IMR-90 (cell line): ENCODE measurements at regions of chr9 and their contacts with region 1.

Region 1: DNA sequence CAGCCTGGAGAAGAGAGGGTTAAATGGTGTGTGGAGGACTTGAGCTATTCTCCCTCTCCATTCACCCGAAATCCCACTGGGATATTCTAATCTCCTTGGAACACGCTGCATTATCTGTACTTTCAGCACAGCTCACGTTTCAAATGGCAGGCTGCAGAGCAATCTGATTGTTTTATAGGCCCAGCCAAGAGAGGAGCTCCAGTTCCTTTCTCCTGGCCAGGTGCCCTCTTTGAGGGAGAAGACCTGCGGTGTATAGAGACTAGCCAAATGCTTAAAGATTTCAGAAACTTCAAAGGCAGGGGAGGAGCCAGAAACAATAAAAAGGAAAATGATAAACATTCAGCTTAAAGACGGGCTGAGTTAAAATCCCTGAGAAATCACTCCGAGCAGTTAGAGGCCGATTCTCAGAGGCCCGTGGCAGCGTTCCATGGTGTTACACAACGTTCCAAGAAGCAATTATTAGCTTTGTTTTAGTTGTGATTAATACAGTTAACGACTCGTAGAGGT is 564.0 kb upstream of the KLF4 start:
- DNase-seq: peak; percentile 80
- ATAC-seq: 0 out of 2 replicates have a peak, but pooled peaks have one; percentile 2
- H3K4me3 ChIP-seq: no peak overlapping the region
- H3K27ac ChIP-seq: peak overlapping the region; percentile 70; the same call in 1 of the 2 replicates
- H3K4me1 ChIP-seq: peaks cover 32% of the 10 kb centered on the region
- H3K27me3 ChIP-seq: no peaks in the 10 kb centered on the region
- CTCF ChIP-seq: no peak
- POLR2A ChIP-seq: no peak
- RAD21 ChIP-seq: no peak

Region 2: GRCh38 chr9:107496976-107497375 is 556.6 kb before region 1 on chr9:
- CTCF ChIA-PET with region 1: no interaction called
- POLR2A ChIA-PET with region 1: no interaction called
- dilution Hi-C with region 1: no loop called
- in situ Hi-C with region 1: loop called (anchors 5 kb)
- intact Hi-C with region 1: no loop called
- DNase-seq: no peak
- ATAC-seq: no peak
- H3K4me3 ChIP-seq: no peak overlapping the region
- H3K27ac ChIP-seq: no peak overlapping the region
- H3K4me1 ChIP-seq: peaks cover 2% of the 10 kb centered on the region; the same call in 1 of the 2 replicates
- H3K27me3 ChIP-seq: peaks cover 6% of the 10 kb centered on the region
- CTCF ChIP-seq: no peak
- POLR2A ChIP-seq: no peak
- RAD21 ChIP-seq: no peak

Region 3: GRCh38 chr9:107737987-107738743 is 315.4 kb before region 1 on chr9:
- CTCF ChIA-PET with region 1: no interaction called
- POLR2A ChIA-PET with region 1: no interaction called
- dilution Hi-C with region 1: no loop called
- in situ Hi-C with region 1: loop called (anchors 10 kb)
- intact Hi-C with region 1: loop called (anchors 5 kb)
- DNase-seq: peak; percentile 95
- ATAC-seq: peak; percentile 83
- H3K4me3 ChIP-seq: no peak overlapping the region
- H3K27ac ChIP-seq: peak overlapping the region; percentile 96
- H3K4me1 ChIP-seq: peaks cover 39% of the 10 kb centered on the region
- H3K27me3 ChIP-seq: no peaks in the 10 kb centered on the region
- CTCF ChIP-seq: no peak; the same call in 1 of the 2 replicates
- POLR2A ChIP-seq: peak; percentile 87
- RAD21 ChIP-seq: no peak; the same call in none of the 2 replicates

Region 4: GRCh38 chr9:108070861-108071260 is 17.3 kb after region 1 on chr9:
- CTCF ChIA-PET with region 1: no interaction called
- POLR2A ChIA-PET with region 1: no interaction called
- dilution Hi-C with region 1: no loop called
- in situ Hi-C with region 1: no loop called
- intact Hi-C with region 1: no loop called
- DNase-seq: no peak
- ATAC-seq: no peak
- H3K4me3 ChIP-seq: no peak overlapping the region
- H3K27ac ChIP-seq: no peak overlapping the region
- H3K4me1 ChIP-seq: no peaks in the 10 kb centered on the region; the same call in 1 of the 2 replicates
- H3K27me3 ChIP-seq: peaks cover 2% of the 10 kb centered on the region; the same call in 1 of the 2 replicates
- CTCF ChIP-seq: no peak
- POLR2A ChIP-seq: no peak
- RAD21 ChIP-seq: no peak

Region 5: DNA sequence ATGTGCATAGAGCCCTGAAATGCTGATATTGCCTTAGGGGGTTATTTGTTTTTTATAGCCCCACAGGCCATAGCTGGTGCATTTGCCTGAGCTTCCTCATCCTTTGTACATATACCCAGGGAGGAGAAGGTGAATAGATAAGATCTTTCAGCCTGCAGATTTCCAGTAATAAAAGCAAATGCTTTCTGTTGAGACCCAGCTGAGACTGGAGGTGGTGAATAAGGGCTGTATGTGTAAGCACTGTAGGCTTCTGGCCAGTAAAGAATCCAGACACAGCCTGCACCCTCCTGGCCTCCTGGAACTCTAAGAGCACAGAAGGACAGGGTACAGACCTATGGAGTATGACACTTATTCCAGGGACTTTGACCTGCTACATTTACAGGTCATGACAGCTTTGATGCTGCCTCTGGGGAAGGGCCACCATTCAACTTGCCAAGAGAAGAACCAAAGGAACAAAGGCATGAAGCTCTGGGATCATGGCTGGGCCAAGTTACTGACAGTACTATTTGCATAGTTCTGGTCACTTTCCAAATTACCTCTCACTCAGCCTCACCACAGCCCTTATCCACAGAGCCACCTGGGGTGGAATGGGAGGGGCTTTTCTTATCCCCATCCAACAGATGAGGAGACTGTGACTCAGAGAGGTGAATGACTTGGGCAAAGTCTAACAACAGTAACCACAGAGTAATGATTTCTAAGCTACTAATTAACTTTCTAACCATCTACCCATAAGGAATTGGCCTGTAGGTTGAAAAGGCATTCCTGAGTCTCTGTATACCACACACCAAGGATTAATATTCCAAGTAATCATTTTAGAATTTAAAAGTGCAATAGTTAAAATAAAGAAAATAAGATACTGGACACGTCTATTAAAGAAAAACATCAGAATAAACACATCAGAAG is 40.4 kb after region 1 on chr9:
- CTCF ChIA-PET with region 1: no interaction called
- POLR2A ChIA-PET with region 1: no interaction called
- dilution Hi-C with region 1: no loop called
- in situ Hi-C with region 1: no loop called
- intact Hi-C with region 1: no loop called
- DNase-seq: no peak
- ATAC-seq: peak; percentile 32; the same call in 1 of the 2 replicates
- H3K4me3 ChIP-seq: no peak overlapping the region
- H3K27ac ChIP-seq: no peak overlapping the region
- H3K4me1 ChIP-seq: no peaks in the 10 kb centered on the region
- H3K27me3 ChIP-seq: no peaks in the 10 kb centered on the region; the same call in 1 of the 2 replicates
- CTCF ChIP-seq: no peak
- POLR2A ChIP-seq: no peak
- RAD21 ChIP-seq: no peak

Region 6: GRCh38 chr9:108184941-108185340 is 131.3 kb after region 1 on chr9:
- CTCF ChIA-PET with region 1: no interaction called
- POLR2A ChIA-PET with region 1: no interaction called
- dilution Hi-C with region 1: no loop called
- in situ Hi-C with region 1: no loop called
- intact Hi-C with region 1: loop called (anchors 5 kb)
- DNase-seq: peak; percentile 34
- ATAC-seq: peak; percentile 48
- H3K4me3 ChIP-seq: no peak overlapping the region
- H3K27ac ChIP-seq: no peak overlapping the region
- H3K4me1 ChIP-seq: peaks cover 2% of the 10 kb centered on the region
- H3K27me3 ChIP-seq: no peaks in the 10 kb centered on the region
- CTCF ChIP-seq: no peak
- POLR2A ChIP-seq: no peak
- RAD21 ChIP-seq: no peak

Region 7: DNA sequence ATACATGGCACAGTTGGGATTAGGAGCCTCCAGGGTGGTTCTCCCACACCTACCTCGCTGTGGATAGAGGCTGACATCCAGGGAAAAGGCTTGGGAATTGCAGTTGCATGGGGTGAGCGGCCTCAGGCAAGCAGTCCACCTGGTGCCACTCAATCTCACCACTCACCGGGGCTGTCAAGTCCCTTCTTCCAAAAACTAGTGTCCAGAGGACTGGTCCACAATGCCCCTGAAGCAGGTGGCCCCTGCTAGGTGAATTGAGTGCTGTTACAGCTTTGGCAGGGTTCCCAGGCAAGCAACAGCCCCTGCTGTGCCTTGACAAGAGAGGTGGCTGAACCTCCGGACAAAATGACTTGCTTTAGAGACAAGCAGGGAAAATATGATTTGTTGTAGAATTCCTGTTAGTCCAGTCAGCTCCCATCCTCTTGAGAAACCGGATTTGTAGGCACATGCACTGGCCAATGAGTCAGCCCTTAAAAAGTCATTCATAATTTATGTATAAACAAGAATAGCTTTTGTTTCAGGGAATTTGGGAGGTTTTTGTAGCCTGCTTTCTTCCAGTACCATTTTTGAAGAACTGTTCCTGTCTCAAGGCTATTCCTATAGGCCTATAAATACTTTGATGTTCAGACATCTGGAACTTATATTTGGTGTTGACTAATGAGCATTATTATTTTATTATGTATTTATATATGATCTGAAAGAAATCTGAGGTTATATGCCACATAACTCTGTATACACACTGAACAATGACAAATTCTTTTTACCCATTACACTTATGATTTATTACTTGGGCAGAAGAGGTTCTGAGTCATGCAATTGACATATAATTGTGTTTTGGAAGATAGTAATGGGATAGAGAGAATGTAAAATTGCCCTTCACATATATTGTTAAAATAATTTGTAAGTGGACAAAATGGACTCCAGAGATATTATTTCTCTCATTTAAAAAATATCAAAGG is 391.1 kb after region 1 on chr9:
- CTCF ChIA-PET with region 1: no interaction called
- POLR2A ChIA-PET with region 1: no interaction called
- dilution Hi-C with region 1: no loop called
- in situ Hi-C with region 1: no loop called
- intact Hi-C with region 1: loop called (anchors 5 kb)
- DNase-seq: peak; percentile 96
- ATAC-seq: peak; percentile 60
- H3K4me3 ChIP-seq: peak overlapping the region; percentile 30
- H3K27ac ChIP-seq: peak overlapping the region; percentile 96
- H3K4me1 ChIP-seq: peaks cover 19% of the 10 kb centered on the region
- H3K27me3 ChIP-seq: no peaks in the 10 kb centered on the region
- CTCF ChIP-seq: no peak
- POLR2A ChIP-seq: no peak
- RAD21 ChIP-seq: no peak